ENCODE measurements at regions of chr11 and their contacts with region 1.

Region 1: GRCh38 chr11:123104697-123105096 is 42.8 kb upstream of the HSPA8 start:
- DNase-seq: no peak
- H3K4me3 ChIP-seq: no peak overlapping the region
- H3K27ac ChIP-seq: peak overlapping the region in 1 of 2 donors; percentile 55
- H3K4me1 ChIP-seq: peaks cover 0 to 5% of the 10 kb centered on the region in 2 donors
- H3K27me3 ChIP-seq: no peaks in the 10 kb centered on the region
- CTCF ChIP-seq: no peak
- POLR2A ChIP-seq: no peak

Region 2: GRCh38 chr11:123249354-123249753 is 144.7 kb after region 1 on chr11:
- intact Hi-C with region 1: loop called (anchors 1 kb)
- DNase-seq: no peak
- H3K4me3 ChIP-seq: no peak overlapping the region
- H3K27ac ChIP-seq: no peak overlapping the region
- H3K4me1 ChIP-seq: no peaks in the 10 kb centered on the region
- H3K27me3 ChIP-seq: no peaks in the 10 kb centered on the region
- CTCF ChIP-seq: no peak
- POLR2A ChIP-seq: no peak